ENCODE measurements at regions of chr9 and their contacts with region 1.

Region 1: GRCh38 chr9:75185585-75186170 is 97.4 kb downstream of the OSTF1 start:
- DNase-seq: no peak
- H3K4me3 ChIP-seq: no peak overlapping the region
- CTCF ChIP-seq: peak; percentile 65

Region 2: GRCh38 chr9:75170898-75171360 is 14.7 kb before region 1 on chr9:
- CTCF ChIA-PET with region 1: interaction called, 26 read pairs
- POLR2A ChIA-PET with region 1: no interaction called
- DNase-seq: no peak
- H3K4me3 ChIP-seq: no peak overlapping the region
- CTCF ChIP-seq: no peak

Region 3: DNA sequence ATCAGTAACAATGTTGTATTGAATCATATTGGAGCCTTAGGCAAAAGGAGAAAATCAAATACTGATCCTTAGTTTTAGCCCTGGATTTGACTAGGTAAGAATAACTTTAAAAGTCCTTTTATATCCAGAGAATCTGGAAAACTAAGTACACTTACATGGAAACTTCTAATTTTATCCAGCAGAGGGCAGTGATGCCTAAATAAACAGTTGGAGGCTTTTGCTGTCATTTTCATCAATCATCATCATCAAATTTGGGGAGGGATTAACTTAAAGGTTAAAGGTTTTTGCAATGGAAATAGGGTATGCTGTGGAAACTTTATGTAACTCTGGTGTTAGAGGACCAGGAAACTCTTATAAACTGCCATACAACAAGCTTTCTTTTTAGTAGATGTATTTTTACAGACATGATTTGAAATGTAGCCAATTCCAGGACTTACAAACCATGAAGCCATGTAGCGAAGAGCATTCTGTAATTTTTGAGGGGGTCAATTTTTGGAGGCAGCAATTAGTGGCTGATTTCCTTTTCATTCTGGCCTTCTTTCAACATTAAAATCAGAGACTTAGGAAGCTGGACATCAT is 15.3 kb after region 1 on chr9:
- CTCF ChIA-PET with region 1: interaction called, 36 read pairs
- POLR2A ChIA-PET with region 1: no interaction called
- DNase-seq: no peak
- H3K4me3 ChIP-seq: no peak overlapping the region
- CTCF ChIP-seq: peak; percentile 31

Region 4: DNA sequence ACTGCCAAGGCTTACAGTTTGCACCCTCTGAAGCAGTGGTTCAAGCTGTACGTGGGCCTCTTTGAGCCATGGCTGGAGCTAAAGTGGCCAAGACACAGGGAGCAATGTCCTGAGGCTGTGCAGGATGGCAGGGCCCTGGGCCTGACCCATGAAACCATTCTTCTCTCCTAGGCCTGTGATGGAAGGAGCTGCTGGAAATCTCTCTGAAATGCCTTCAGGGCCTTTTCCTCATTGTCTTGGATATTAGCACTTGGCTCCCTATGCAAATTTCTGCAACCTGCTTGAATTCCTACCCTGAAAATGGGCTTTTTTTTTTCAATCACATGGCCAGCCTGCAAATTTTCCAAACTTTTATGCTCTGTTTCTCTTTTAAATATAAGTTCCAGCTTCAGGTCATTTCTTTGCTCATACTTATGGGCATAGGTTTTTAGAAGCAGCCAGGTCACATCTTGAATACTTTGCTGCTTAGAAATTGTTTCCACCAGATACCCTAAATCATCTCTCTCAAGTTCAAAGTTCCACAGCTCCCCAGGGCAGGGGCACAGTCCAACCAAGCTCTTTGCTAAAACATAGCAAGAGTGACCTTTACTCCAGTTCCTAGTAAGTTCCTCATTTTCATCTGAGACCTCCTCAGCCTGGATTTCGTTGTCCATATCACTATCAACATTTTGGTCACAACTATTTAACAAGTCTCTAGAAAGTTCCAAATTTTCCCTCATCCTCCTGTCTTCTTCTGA is 40.9 kb after region 1 on chr9:
- CTCF ChIA-PET with region 1: no interaction called
- POLR2A ChIA-PET with region 1: no interaction called
- DNase-seq: no peak
- H3K4me3 ChIP-seq: no peak overlapping the region
- CTCF ChIP-seq: no peak

Measured in AG04449 (cell line).